Activated CD4-positive, alpha-beta memory T cell treated with anti-CD3 and anti-CD28 coated beads, Interleukin-2, amount 10 ng/mL, durations not matched to agents 7 days and 5 days (primary cell): ENCODE measurements at regions of chr22 and their contacts with region 1.

Region 1: GRCh38 chr22:26483439-26484359 is at the starts of genes HPS4 and SRRD:
- DNase-seq: peak; percentile 93
- H3K4me3 Mint-ChIP-seq: peak within 1 kb of the TSS; percentile 93
- H3K27ac Mint-ChIP-seq: peak within 1 kb of the TSS; percentile 71
- H3K4me1 Mint-ChIP-seq: peaks cover 68% of the 10 kb centered on the region
- H3K27me3 Mint-ChIP-seq: no peaks in the 10 kb centered on the region
- total RNA-seq, gene HPS4: 37.3 to 37.6 TPM
- total RNA-seq, gene SRRD: 17.5 TPM

Region 2: GRCh38 chr22:26236991-26237390 is 246.7 kb before region 1 on chr22:
- CTCF ChIA-PET with region 1: no interaction called
- POLR2A ChIA-PET with region 1: no interaction called
- DNase-seq: no peak
- H3K4me3 Mint-ChIP-seq: no peak overlapping the region
- H3K27ac Mint-ChIP-seq: no peak overlapping the region
- H3K4me1 Mint-ChIP-seq: no peaks in the 10 kb centered on the region
- H3K27me3 Mint-ChIP-seq: peaks cover 3% of the 10 kb centered on the region

Region 3: GRCh38 chr22:26428515-26429457 is 54.9 kb before region 1 on chr22 and contains the start of gene ASPHD2:
- CTCF ChIA-PET with region 1: interaction called, 5 read pairs
- POLR2A ChIA-PET with region 1: interaction called, 28 read pairs
- DNase-seq: peak; percentile 82
- H3K4me3 Mint-ChIP-seq: peak within 1 kb of the TSS; percentile 93
- H3K27ac Mint-ChIP-seq: peak within 1 kb of the TSS; percentile 97
- H3K4me1 Mint-ChIP-seq: peaks cover 50% of the 10 kb centered on the region
- H3K27me3 Mint-ChIP-seq: peaks cover 10% of the 10 kb centered on the region
- total RNA-seq, gene ASPHD2: 11.8 to 12.7 TPM

Region 4: GRCh38 chr22:26511857-26512793 is 28.4 kb after region 1 on chr22 and contains the start of gene TFIP11:
- CTCF ChIA-PET with region 1: interaction called, 8 read pairs
- POLR2A ChIA-PET with region 1: interaction called, 25 read pairs
- DNase-seq: peak; percentile 93
- H3K4me3 Mint-ChIP-seq: peak within 1 kb of the TSS; percentile 100
- H3K27ac Mint-ChIP-seq: peak within 1 kb of the TSS; percentile 89
- H3K4me1 Mint-ChIP-seq: peaks cover 53% of the 10 kb centered on the region
- H3K27me3 Mint-ChIP-seq: no peaks in the 10 kb centered on the region
- total RNA-seq, gene TFIP11: 50.8 to 55.5 TPM

Region 5: DNA sequence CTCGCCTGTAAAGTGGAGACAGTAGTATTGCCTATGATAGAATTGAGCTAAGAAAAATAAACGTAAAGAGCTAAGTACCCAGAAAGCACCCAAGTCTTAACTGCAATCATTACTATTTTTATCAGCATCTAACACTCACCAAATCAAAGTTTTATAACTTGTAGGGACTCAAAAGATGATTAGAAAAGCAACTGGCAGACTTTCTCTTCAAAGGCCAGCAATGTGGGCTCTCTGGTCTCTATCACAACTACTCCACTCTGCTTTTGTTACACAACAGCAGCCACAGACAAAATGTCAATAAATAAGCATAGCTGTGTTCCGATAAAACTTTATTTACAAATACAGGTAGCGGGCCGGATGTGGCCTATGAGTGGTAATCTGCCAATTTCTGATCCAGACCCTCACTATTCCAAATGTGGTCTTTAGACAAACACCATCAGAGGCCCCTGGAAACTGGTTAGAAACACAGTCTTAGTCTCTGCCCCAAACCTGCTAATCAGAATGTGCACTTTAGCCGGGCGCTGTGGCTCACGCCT is 98.0 kb after region 1 on chr22:
- CTCF ChIA-PET with region 1: no interaction called
- POLR2A ChIA-PET with region 1: no interaction called
- DNase-seq: no peak
- H3K4me3 Mint-ChIP-seq: no peak overlapping the region
- H3K27ac Mint-ChIP-seq: no peak overlapping the region
- H3K4me1 Mint-ChIP-seq: peaks cover 77% of the 10 kb centered on the region
- H3K27me3 Mint-ChIP-seq: no peaks in the 10 kb centered on the region

Region 6: GRCh38 chr22:26610072-26610958 is 126.6 kb after region 1 on chr22:
- CTCF ChIA-PET with region 1: no interaction called
- POLR2A ChIA-PET with region 1: no interaction called
- DNase-seq: peak; percentile 84
- H3K4me3 Mint-ChIP-seq: peak overlapping the region; percentile 56
- H3K27ac Mint-ChIP-seq: peak overlapping the region; percentile 85
- H3K4me1 Mint-ChIP-seq: peaks cover 38% of the 10 kb centered on the region
- H3K27me3 Mint-ChIP-seq: peaks cover 22% of the 10 kb centered on the region

Region 7: GRCh38 chr22:26632422-26633155 is 148.9 kb after region 1 on chr22:
- CTCF ChIA-PET with region 1: no interaction called
- POLR2A ChIA-PET with region 1: no interaction called
- DNase-seq: no peak
- H3K4me3 Mint-ChIP-seq: no peak overlapping the region
- H3K27ac Mint-ChIP-seq: no peak overlapping the region
- H3K4me1 Mint-ChIP-seq: peaks cover 32% of the 10 kb centered on the region
- H3K27me3 Mint-ChIP-seq: peaks cover 11% of the 10 kb centered on the region

Region 8: GRCh38 chr22:26642465-26643417 is 159.0 kb after region 1 on chr22:
- CTCF ChIA-PET with region 1: no interaction called
- POLR2A ChIA-PET with region 1: interaction called, 14 read pairs
- DNase-seq: peak; percentile 89
- H3K4me3 Mint-ChIP-seq: peak overlapping the region; percentile 53
- H3K27ac Mint-ChIP-seq: peak overlapping the region; percentile 94
- H3K4me1 Mint-ChIP-seq: peaks cover 85% of the 10 kb centered on the region
- H3K27me3 Mint-ChIP-seq: no peaks in the 10 kb centered on the region

Region 9: DNA sequence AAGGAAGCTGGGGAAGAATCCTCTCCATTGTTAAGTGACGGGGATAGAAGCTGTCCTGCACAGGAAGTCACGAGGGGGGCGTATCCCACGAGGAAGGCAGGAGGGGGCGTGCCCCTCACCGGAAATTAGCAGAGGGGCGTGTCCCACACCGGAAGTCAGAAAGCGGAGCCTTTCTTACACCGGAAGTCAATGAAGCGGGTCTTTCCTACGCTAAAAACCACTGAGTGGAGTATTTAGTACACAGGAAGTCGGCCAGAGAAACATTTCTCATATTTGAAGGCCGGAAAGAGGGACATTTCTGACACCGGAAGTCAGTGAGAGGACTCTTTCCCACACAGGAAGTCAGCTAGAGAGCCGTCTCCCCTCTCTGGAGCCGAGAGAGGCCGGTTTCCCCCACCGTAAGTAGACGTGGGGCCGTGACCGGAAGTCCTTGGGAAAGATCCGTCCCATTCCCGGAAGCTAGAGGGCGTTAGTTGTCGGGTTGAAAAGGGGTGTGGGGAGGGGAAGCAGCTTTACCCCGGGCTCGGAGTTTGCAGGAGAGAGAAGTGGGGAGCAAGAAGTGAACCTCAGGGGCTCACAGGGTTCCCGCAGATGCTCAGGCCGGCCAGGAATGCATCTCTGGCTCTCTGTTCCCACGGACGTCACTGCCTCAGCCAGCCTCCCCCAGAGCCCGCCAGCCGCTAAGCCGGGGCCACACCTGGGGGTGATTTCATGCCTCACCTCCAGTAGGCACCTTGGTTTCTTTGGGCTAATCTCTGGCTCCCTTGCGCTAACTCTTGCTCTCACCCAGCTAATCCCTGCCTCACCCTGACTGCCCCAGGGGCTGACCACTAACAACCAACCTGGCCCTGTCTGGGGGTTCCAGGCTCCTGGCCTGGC is 189.1 kb after region 1 on chr22:
- CTCF ChIA-PET with region 1: interaction called, 17 read pairs
- POLR2A ChIA-PET with region 1: interaction called, 92 read pairs
- DNase-seq: peak; percentile 97
- H3K4me3 Mint-ChIP-seq: peak overlapping the region; percentile 90
- H3K27ac Mint-ChIP-seq: peak overlapping the region; percentile 100
- H3K4me1 Mint-ChIP-seq: peaks cover 77% of the 10 kb centered on the region
- H3K27me3 Mint-ChIP-seq: no peaks in the 10 kb centered on the region